Panc1 (cell line): ENCODE measurements at regions of chr12 and their contacts with region 1.

Region 1: GRCh38 chr12:53005986-53006809 is at the start of gene EIF4B:
- DNase-seq: peak; percentile 98
- ATAC-seq: peak; percentile 91
- H3K4me3 ChIP-seq: peak within 1 kb of the TSS; percentile 91 to 97
- H3K27ac ChIP-seq: peak within 1 kb of the TSS; percentile 99
- H3K4me1 ChIP-seq: peaks cover 33% of the 10 kb centered on the region
- H3K27me3 ChIP-seq: no peaks in the 10 kb centered on the region
- CTCF ChIP-seq: no peak
- total RNA-seq, gene EIF4B: 351 TPM

Region 2: GRCh38 chr12:52203075-52203921 is 802.9 kb before region 1 on chr12:
- CTCF ChIA-PET with region 1: no interaction called
- POLR2A ChIA-PET with region 1: interaction called, 15 read pairs
- in situ Hi-C with region 1: no loop called
- intact Hi-C with region 1: no loop called
- DNase-seq: no peak
- ATAC-seq: peak; percentile 62
- H3K4me3 ChIP-seq: no peak overlapping the region
- H3K27ac ChIP-seq: peak overlapping the region; percentile 73
- H3K4me1 ChIP-seq: peaks cover 72% of the 10 kb centered on the region
- H3K27me3 ChIP-seq: no peaks in the 10 kb centered on the region
- CTCF ChIP-seq: no peak

Region 3: DNA sequence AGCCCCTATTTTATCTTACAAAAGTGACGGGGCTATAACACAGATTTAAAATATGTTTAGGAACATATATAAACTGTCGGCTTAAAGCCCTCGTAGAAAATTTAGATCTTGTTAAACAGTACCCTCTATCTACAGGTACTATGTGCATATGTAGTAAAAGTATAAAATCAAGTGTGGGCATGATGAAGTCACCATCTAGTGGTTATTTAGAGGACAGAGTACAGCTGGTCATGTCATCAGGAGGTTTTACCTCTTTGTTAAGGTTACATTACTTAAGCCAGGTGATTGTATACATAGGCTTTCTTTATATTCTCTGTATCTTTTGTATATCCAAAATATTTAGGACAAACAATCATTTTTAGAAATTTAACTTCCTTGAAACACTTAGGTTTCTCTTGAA is 25.4 kb after region 1 on chr12:
- CTCF ChIA-PET with region 1: interaction called, 11 read pairs
- POLR2A ChIA-PET with region 1: no interaction called
- in situ Hi-C with region 1: no loop called
- intact Hi-C with region 1: no loop called
- DNase-seq: no peak
- ATAC-seq: no peak
- H3K4me3 ChIP-seq: no peak overlapping the region
- H3K27ac ChIP-seq: no peak overlapping the region
- H3K4me1 ChIP-seq: no peaks in the 10 kb centered on the region
- H3K27me3 ChIP-seq: no peaks in the 10 kb centered on the region
- CTCF ChIP-seq: no peak